Colonic mucosa (tissue), 4 donors: ENCODE measurements at regions of chr2 and their contacts with region 1.

Region 1: DNA sequence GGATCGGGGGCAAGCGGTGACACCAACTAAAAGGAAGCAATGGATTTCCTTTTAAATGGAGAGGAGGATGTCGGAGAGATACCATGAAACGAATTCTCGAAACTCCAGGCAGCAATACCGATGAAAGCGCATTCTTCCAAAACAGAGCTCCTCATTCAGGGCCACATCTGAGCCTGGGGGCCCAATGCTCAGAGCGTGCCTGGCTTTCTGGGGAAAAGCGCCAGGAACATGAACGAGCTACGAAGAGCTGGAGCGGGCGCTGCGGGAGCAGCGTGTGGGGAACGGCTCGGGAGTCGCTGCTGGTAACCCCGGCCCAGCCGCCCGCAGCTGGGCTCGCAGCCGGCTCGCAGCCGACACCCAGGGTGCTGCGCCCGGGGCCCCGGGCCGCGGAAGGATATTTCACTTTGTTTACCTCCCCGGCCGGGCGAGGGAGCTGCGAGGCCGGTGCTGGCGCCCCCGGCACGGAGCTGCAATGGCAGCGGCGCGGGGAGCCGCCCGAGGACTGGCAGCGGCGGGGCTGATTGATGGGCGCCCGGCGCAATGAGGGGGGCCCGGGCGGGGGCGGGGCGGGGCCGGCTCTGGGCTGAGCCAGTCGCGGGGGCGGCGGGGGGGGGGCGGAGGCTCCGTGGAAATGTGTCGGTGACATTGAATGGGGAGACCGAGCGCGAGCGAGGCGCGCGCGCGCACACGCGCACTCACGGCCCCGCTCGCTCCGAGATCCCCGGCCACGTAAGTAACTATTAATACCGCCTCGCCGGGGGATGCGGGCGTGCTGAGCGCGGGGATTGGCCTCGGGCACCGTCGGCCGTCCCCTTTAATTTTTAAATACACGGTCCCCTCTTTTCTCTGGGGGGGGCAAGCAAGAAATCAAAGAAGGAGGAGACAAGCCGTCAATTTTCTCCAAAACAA is at the start of gene TRIB2:
- DNase-seq: peak; percentile 74
- H3K4me3 ChIP-seq: peak within 1 kb of the TSS; percentile 71
- H3K27ac ChIP-seq: peak within 1 kb of the TSS; percentile 87
- H3K4me1 ChIP-seq: no peaks in the 10 kb centered on the region
- H3K27me3 ChIP-seq: peaks cover 20% of the 10 kb centered on the region
- CTCF ChIP-seq: no peak
- total RNA-seq, gene TRIB2: 3.7 to 10.5 TPM

Region 2: GRCh38 chr2:11863513-11864328 is 852.8 kb before region 1 on chr2:
- intact Hi-C with region 1: loop called (anchors 2 kb)
- DNase-seq: peak; percentile 68
- H3K4me3 ChIP-seq: no peak overlapping the region
- H3K27ac ChIP-seq: no peak overlapping the region
- H3K4me1 ChIP-seq: no peaks in the 10 kb centered on the region
- H3K27me3 ChIP-seq: no peaks in the 10 kb centered on the region
- CTCF ChIP-seq: peak; percentile 94

Region 3: DNA sequence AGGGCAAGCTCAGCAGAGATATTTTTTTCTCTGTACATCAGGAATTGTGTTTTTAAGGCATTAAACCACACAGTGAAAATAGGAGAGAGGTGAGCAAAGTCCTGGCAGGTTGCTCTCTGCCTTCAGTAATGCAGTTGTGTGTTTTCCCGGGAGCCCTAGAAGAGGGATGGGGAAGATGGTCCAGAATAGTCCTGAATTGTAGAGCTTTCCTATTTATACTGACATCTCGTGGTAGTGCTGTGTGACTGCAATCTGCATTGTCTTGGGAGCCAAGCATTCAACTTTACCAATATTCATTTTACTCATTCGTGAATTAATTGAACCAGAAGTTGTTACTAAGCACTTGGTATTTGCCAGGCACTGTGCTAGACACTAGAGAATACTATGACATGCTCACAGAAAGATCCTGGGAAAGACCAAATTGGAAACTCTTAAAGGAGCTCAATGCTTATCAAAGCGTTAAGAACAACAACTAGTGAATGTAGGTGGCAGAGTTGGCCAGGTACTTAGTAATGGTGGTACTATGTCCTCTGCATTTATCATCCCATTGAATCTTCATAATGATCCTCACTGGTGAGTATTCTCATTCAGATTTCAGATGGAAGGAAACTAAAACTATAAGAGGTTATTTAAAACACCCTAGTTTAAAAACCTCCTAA is 214.8 kb after region 1 on chr2:
- intact Hi-C with region 1: loop called (anchors 5 kb)
- DNase-seq: no peak
- H3K4me3 ChIP-seq: no peak overlapping the region
- H3K27ac ChIP-seq: no peak overlapping the region
- H3K4me1 ChIP-seq: no peaks in the 10 kb centered on the region
- H3K27me3 ChIP-seq: no peaks in the 10 kb centered on the region
- CTCF ChIP-seq: peak; percentile 73

Region 4: GRCh38 chr2:13006829-13007717 is 290.5 kb after region 1 on chr2:
- intact Hi-C with region 1: loop called (anchors 10 kb)
- DNase-seq: peak; percentile 50
- H3K4me3 ChIP-seq: no peak overlapping the region
- H3K27ac ChIP-seq: no peak overlapping the region
- H3K4me1 ChIP-seq: no peaks in the 10 kb centered on the region
- H3K27me3 ChIP-seq: no peaks in the 10 kb centered on the region
- CTCF ChIP-seq: peak; percentile 86

Region 5: GRCh38 chr2:13021470-13021957 is 305.0 kb after region 1 on chr2:
- intact Hi-C with region 1: no loop called
- DNase-seq: no peak
- H3K4me3 ChIP-seq: no peak overlapping the region
- H3K27ac ChIP-seq: no peak overlapping the region
- H3K4me1 ChIP-seq: no peaks in the 10 kb centered on the region
- H3K27me3 ChIP-seq: no peaks in the 10 kb centered on the region
- CTCF ChIP-seq: no peak